Activated B cell treated with CpG ODN at 0.5 μM for 24 hours (primary cell): ENCODE measurements at regions of chr10 and their contacts with region 1.

Region 1: DNA sequence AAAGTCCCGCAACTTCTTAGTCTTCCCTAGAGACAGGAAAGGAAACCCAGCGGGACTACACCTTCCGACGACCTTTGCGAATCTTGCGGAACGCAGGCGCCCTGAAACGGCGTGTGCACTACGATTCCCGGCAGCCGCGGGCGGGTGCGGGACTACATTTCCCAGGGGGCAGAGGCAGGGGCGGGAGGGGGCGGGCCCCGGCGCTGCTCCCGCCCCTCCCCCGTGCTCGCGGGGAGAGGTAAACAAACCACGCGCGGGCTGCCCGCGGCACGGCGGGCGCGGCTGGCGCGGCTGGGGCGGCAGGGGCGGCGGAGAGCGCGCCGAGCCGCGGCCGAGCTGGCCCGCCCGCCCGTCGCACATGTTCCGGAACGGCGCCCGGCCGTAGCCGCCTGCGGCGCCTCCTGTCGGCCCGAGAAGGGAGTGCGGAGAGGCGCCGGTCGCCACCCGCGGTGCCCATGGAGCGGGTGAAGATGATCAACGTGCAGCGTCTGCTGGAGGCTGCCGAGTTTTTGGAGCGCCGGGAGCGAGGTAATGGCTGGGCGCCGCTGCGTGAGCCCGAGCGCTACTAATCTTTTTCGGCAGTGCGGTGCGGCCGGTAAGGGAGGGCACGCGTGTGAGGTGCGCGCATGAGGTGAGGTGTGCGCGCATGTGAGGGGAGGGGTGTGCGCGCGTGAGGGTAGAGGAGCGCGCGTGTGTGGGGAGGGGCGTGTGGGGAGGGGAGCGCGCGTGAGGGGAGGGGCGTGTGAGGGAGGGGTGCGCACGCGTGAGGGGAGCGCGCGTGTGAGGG is 18.5 kb downstream of the MXI1 start:
- DNase-seq: peak; percentile 83
- ATAC-seq: peak; percentile 51
- H3K4me3 Mint-ChIP-seq: peak overlapping the region; percentile 97
- H3K27ac Mint-ChIP-seq: peak overlapping the region; percentile 96
- H3K4me1 Mint-ChIP-seq: peaks cover 28% of the 10 kb centered on the region
- H3K27me3 Mint-ChIP-seq: no peaks in the 10 kb centered on the region
- CTCF ChIP-seq: no peak

Region 2: DNA sequence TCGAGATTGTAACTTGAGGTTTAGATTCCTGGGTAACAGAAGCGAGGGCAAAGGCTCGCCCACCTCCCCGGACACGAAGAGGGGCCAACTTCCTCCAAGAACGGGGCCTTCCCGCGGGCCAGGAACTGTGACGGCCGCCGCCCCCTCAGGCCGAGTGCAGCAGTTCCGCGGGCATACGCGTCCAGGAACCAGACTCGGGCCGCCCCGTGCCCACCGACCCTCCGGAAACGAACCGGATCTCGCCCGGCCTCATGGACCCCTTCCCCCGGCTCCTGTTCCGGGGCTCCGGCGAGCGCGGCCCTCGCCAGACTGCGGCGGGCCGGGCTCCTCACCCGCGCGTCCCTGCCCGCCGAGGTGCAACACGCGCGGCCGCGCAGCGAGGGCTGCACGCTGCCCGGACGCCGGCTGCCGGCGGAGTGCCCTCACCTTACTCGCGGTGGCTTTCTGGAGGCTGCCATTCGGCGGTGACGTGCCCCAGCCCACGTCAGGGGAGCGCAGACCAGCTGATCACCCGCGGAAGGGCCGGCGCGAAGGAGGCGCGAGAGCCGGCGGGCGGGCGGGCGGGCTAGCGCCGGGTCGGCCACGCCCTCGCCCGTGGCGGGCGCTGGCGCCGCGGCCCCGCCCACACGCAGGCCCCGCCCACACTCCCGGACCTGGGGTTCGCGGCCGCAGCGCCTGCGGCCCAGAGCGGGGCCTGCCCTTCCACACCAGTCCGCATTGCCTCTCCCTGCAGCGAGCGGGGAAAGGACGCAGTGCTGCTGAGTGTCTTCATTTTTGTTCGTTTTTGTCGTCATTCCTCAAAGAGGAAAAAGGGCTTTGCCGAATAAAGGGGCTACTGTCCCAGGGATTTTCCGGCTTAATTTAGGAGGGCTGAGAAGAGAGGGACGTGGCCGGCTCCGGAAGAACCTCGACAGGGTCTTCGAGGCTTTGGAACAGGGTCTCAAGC is 302.7 kb before region 1 on chr10 and contains the start of gene XPNPEP1:
- CTCF ChIA-PET with region 1: no interaction called
- POLR2A ChIA-PET with region 1: interaction called, 3 read pairs
- intact Hi-C with region 1: loop called (anchors 1 kb)
- DNase-seq: peak; percentile 85
- ATAC-seq: peak; percentile 94
- H3K4me3 Mint-ChIP-seq: peak within 1 kb of the TSS; percentile 88
- H3K27ac Mint-ChIP-seq: peak within 1 kb of the TSS; percentile 81
- H3K4me1 Mint-ChIP-seq: peaks cover 36% of the 10 kb centered on the region
- H3K27me3 Mint-ChIP-seq: peaks cover 2% of the 10 kb centered on the region
- CTCF ChIP-seq: no peak
- total RNA-seq, gene XPNPEP1: 53.5 and 70.6 TPM in 2 replicates

Region 3: DNA sequence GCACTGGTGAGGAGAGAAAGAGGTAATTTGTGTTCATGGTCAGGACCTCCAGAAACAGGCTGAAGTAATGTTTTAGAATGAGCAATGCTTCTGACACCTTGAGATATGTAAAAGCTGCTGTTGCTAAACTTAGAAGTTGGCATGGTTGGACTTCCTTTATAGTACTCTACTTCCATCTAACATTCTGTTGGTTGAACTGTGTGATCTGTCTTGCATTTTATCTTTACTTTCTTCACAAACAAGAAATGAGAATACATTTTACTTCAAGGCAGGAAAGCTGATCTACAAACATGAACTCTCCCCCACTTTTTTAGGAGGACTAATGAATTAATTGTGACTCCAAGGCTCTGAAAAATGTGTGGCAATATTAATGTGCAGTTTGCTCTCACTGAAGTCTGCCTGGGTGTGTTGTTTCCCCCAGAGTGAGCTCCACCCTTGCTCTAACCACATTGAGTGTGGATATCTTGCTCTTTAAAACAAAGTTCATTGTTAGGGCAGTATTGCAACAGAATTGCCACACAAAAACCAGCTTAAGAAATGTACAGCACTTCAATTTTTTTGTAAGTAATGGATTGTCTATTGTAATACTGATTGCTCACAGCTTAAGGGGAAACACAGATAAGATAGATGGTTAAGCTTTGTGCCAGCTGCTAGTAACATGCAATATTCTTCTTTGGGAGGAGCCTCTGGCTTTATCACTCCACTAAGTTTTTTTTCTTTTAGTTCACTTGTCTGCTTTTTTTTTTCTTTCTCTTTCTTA is 149.2 kb before region 1 on chr10:
- CTCF ChIA-PET with region 1: no interaction called
- POLR2A ChIA-PET with region 1: interaction called, 3 read pairs
- intact Hi-C with region 1: loop called (anchors 5 kb)
- DNase-seq: no peak
- ATAC-seq: peak; percentile 59
- H3K4me3 Mint-ChIP-seq: peak overlapping the region; percentile 85
- H3K27ac Mint-ChIP-seq: peak overlapping the region; percentile 99
- H3K4me1 Mint-ChIP-seq: peaks cover 84% of the 10 kb centered on the region
- H3K27me3 Mint-ChIP-seq: no peaks in the 10 kb centered on the region
- CTCF ChIP-seq: no peak

Region 4: GRCh38 chr10:110158051-110159005 is 67.6 kb before region 1 on chr10:
- CTCF ChIA-PET with region 1: interaction called, 4 read pairs
- POLR2A ChIA-PET with region 1: interaction called, 4 read pairs
- intact Hi-C with region 1: loop called (anchors 5 kb)
- DNase-seq: no peak
- ATAC-seq: no peak
- H3K4me3 Mint-ChIP-seq: no peak overlapping the region
- H3K27ac Mint-ChIP-seq: no peak overlapping the region
- H3K4me1 Mint-ChIP-seq: peaks cover 45% of the 10 kb centered on the region
- H3K27me3 Mint-ChIP-seq: peaks cover 19% of the 10 kb centered on the region
- CTCF ChIP-seq: no peak

Region 5: DNA sequence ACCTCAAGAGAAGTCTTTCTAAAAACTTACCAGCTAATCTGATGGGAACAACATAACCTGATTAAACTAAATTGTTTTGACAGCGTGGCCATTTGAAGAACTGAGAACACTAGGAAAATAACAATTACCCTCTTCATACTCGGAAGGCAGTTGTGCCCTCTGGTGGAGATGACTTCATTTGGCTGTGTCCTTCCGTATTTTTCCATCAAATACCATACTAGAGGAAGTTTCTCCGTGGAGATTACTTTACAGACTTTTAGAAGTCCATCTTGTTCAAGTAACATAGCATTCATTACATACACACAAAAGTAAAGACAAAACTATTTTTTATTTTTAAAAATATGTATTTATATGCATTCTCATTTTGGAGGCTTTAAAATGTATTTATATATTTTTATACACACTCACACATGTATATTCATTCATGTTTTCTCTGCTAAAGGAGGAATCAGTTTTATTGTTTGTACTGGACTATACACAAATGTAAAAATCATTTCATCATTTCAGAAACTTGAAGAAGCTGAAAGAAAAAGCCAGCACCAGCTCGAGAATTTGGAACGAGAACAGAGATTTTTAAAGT is 53.5 kb after region 1 on chr10:
- CTCF ChIA-PET with region 1: interaction called, 10 read pairs
- POLR2A ChIA-PET with region 1: interaction called, 4 read pairs
- intact Hi-C with region 1: loop called (anchors 1 kb)
- DNase-seq: no peak
- ATAC-seq: peak; percentile 68
- H3K4me3 Mint-ChIP-seq: peak overlapping the region; percentile 38
- H3K27ac Mint-ChIP-seq: no peak overlapping the region
- H3K4me1 Mint-ChIP-seq: peaks cover 24% of the 10 kb centered on the region
- H3K27me3 Mint-ChIP-seq: no peaks in the 10 kb centered on the region
- CTCF ChIP-seq: peak; percentile 92

Region 6: GRCh38 chr10:110576220-110576619 is 350.3 kb after region 1 on chr10:
- CTCF ChIA-PET with region 1: no interaction called
- POLR2A ChIA-PET with region 1: no interaction called
- intact Hi-C with region 1: no loop called
- DNase-seq: no peak
- ATAC-seq: no peak
- H3K4me3 Mint-ChIP-seq: no peak overlapping the region
- H3K27ac Mint-ChIP-seq: no peak overlapping the region
- H3K4me1 Mint-ChIP-seq: peaks cover 18% of the 10 kb centered on the region
- H3K27me3 Mint-ChIP-seq: no peaks in the 10 kb centered on the region
- CTCF ChIP-seq: no peak